Caco-2 (cell line): ENCODE measurements at regions of chr9 and their contacts with region 1.

Region 1: GRCh38 chr9:8857926-8858595 is 1058.5 kb upstream of the DMAC1 start:
- DNase-seq: peak; percentile 40
- H3K4me3 ChIP-seq: peak overlapping the region; percentile 57
- H3K4me3 Mint-ChIP-seq: peak overlapping the region; percentile 87
- H3K27ac Mint-ChIP-seq: no peak overlapping the region
- H3K4me1 ChIP-seq: 0 out of 2 replicates have a peak, but pooled peaks cover 5% of the 10 kb centered on the region
- H3K4me1 Mint-ChIP-seq: no peaks in the 10 kb centered on the region
- H3K27me3 ChIP-seq: no peaks in the 10 kb centered on the region
- H3K27me3 Mint-ChIP-seq: no peaks in the 10 kb centered on the region
- CTCF ChIP-seq: no peak

Region 2: DNA sequence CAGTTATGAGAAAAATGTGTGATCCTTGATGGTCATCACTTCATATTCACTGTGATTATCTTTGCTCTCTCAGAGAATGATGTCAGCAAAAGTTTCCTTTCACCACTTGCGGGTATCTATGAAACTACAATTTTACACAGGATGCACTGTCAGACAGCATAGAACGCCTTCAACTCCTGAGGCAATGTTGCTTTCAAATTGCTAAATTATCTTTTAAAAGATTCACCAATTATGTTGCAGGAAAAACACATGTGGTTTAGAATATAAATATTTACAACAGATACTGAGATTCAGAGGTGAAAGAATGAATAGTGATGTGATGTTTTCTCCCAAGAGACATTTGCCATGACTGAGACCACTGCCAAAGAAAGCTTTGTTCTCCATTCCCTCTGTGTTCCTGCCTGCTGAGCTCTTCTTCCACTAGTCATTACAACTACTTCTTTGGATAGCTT is 178.7 kb before region 1 on chr9:
- CTCF ChIA-PET with region 1: no interaction called
- POLR2A ChIA-PET with region 1: no interaction called
- intact Hi-C with region 1: loop called (anchors 5 kb)
- DNase-seq: no peak
- H3K4me3 ChIP-seq: no peak overlapping the region
- H3K4me3 Mint-ChIP-seq: no peak overlapping the region
- H3K27ac Mint-ChIP-seq: no peak overlapping the region
- H3K4me1 ChIP-seq: peaks cover 14% of the 10 kb centered on the region; the same call in 1 of the 2 replicates
- H3K4me1 Mint-ChIP-seq: no peaks in the 10 kb centered on the region
- H3K27me3 ChIP-seq: no peaks in the 10 kb centered on the region
- H3K27me3 Mint-ChIP-seq: no peaks in the 10 kb centered on the region
- CTCF ChIP-seq: no peak

Region 3: DNA sequence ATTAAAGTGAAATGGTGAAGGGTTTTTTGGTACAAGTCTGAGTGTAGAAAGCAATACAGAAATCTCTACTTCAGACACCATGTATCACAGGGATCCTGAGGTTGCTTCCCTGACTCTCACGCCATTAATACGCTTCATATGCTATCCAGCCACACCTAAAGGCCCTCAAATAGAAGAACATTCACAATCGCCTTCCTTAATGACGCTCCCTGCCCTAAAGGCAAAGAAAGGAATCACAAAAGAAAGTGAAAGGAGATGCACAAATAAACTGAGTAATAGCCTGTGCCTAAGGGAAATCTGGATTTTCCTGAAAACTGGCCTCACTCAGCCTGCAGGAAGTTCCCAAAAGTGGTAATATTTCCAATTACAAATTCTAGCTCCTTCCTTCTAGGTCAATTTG is 55.8 kb before region 1 on chr9:
- CTCF ChIA-PET with region 1: no interaction called
- POLR2A ChIA-PET with region 1: no interaction called
- intact Hi-C with region 1: loop called (anchors 5 kb)
- DNase-seq: no peak
- H3K4me3 ChIP-seq: no peak overlapping the region
- H3K4me3 Mint-ChIP-seq: no peak overlapping the region
- H3K27ac Mint-ChIP-seq: no peak overlapping the region
- H3K4me1 ChIP-seq: peaks cover 15% of the 10 kb centered on the region; the same call in 1 of the 2 replicates
- H3K4me1 Mint-ChIP-seq: peaks cover 11% of the 10 kb centered on the region
- H3K27me3 ChIP-seq: no peaks in the 10 kb centered on the region
- H3K27me3 Mint-ChIP-seq: no peaks in the 10 kb centered on the region
- CTCF ChIP-seq: no peak

Region 4: GRCh38 chr9:8872802-8873201 is 14.7 kb after region 1 on chr9:
- CTCF ChIA-PET with region 1: no interaction called
- POLR2A ChIA-PET with region 1: no interaction called
- intact Hi-C with region 1: no loop called
- DNase-seq: no peak
- H3K4me3 ChIP-seq: no peak overlapping the region
- H3K4me3 Mint-ChIP-seq: no peak overlapping the region
- H3K27ac Mint-ChIP-seq: no peak overlapping the region
- H3K4me1 ChIP-seq: peaks cover 14% of the 10 kb centered on the region
- H3K4me1 Mint-ChIP-seq: no peaks in the 10 kb centered on the region
- H3K27me3 ChIP-seq: no peaks in the 10 kb centered on the region
- H3K27me3 Mint-ChIP-seq: no peaks in the 10 kb centered on the region
- CTCF ChIP-seq: no peak